ENCODE measurements at regions of chr13 and their contacts with region 1.

Region 1: GRCh38 chr13:88857256-88857655 is 1186.1 kb downstream of the SLITRK5 start:
- DNase-seq: no peak
- ATAC-seq: no peak
- H3K4me3 ChIP-seq: no peak overlapping the region
- H3K27ac ChIP-seq: no peak overlapping the region
- H3K4me1 ChIP-seq: no peaks in the 10 kb centered on the region
- H3K27me3 ChIP-seq: no peaks in the 10 kb centered on the region
- CTCF ChIP-seq: no peak

Region 2: DNA sequence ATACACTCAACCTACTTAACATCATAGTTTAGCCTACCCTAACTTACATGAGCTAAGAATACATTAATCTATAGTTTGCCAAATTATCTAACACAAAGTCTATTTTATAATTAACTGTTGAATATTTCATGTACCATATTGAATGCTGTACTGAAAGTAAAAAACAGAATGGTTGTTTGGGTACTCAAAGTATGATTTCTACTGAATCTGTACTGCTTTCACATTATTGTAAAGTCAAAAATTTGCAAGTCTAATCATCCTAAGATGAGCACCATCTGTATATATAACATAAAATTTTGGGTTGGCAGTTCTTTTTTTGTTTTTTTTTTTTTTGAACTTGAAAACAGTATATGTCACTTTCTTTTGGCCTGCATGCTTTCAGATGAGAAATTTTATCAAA is 26.5 kb after region 1 on chr13:
- intact Hi-C with region 1: loop called in 1 of 10 experiments (anchors 2 kb)
- DNase-seq: no peak
- ATAC-seq: no peak
- H3K4me3 ChIP-seq: no peak overlapping the region
- H3K27ac ChIP-seq: no peak overlapping the region
- H3K4me1 ChIP-seq: no peaks in the 10 kb centered on the region
- H3K27me3 ChIP-seq: no peaks in the 10 kb centered on the region
- CTCF ChIP-seq: no peak

Measured in heart right ventricle (tissue), 16 donors.